ENCODE measurements at regions of chr1 and their contacts with region 1.

Region 1: DNA sequence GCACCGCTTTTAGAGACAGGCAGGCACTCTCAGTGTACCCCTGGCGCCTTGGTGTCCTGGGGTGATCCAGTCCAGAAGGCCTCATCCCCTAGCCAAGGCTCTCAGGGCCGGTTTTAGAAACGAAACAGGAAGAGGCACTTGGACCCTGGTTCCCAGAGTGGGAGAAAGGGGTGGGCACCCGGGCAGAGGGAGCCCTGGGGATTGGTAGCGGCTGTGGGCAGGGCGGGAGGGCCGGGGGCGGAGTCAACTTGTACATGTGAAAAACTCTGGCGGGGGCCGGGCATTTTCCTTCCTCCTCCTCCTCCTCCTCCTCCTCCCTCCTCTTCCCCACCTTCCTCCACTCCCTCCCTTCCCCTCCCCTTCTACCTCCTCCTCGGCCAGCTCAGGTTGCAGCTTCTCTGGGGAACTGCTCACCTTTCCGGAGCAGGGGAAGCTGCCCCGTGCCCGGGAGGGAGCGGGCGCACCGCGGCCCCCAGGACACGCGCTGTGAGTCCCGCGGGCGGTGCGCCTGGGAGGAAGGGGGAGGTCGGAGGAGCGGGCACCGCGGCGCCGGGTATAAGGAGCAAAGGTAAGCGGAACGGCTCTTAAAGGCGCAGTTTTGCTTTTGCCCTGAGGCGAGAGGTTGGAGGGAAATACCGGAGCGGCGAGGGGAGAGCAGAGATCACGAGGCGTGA is at the start of gene CDK18:
- DNase-seq: peak; percentile 67
- ATAC-seq: peak; percentile 71
- H3K4me3 ChIP-seq: peak within 1 kb of the TSS; percentile 36 to 81 (median 62)
- H3K4me3 Mint-ChIP-seq: peak within 1 kb of the TSS; percentile 84
- H3K27ac ChIP-seq: no peak within 1 kb of the TSS
- H3K27ac Mint-ChIP-seq: peak within 1 kb of the TSS; percentile 63
- H3K4me1 ChIP-seq: peaks cover 8 to 12% of the 10 kb centered on the region in 2 donors
- H3K4me1 Mint-ChIP-seq: peaks cover 13% of the 10 kb centered on the region
- H3K27me3 ChIP-seq: peaks cover 0 to 10% (median 2%) of the 10 kb centered on the region in 4 experiments
- H3K27me3 Mint-ChIP-seq: peaks cover 3% of the 10 kb centered on the region
- CTCF ChIP-seq: no peak
- total RNA-seq, gene CDK18: 3.7 and 4.7 TPM in 2 replicates

Region 2: DNA sequence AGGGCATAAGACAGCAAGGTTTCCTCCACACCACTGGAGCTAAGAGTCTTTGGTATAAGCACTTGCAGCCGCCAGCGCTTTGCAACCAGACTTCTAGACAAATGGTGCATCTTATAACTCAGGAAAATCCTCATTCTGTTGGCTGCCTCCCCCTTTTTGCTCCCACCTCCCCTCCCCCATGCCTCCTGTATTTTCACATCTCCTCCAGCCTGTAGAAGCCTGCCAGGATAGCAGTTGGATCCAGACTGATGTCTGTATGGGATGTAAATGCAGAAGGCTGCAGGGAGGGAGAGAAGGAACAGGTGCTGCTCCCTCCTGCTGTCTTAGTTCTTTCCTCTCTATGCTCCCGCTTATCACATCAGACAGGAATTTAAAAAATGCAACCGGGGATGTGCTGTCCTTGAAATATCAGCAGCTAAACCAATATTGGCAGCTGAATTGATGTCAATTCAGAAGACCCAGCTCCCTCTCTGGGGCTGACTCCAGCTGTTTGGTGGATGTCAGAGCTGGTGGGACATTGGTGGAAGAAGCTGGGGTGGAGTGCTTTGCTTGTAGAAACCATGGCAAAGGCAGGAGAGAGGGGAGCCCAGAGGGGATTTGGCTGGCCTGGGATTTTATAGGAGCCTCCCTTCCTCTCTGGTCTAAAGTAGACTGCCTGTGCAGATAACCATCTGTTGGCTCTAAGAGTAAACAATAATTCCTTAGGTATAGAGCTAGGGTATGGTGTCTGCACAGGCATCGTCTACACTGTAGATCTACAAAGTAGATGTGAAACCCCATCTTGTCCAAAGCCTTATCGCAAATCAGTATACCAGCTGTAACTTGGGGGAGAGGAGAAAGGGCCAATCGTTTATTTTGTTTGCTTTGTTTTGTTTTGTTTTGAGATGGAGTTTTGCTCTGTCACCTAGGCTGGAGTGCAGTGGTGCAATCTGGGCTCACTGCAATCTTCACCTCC is 580.2 kb before region 1 on chr1:
- CTCF ChIA-PET with region 1: no interaction called
- POLR2A ChIA-PET with region 1: no interaction called
- intact Hi-C with region 1: no loop called
- DNase-seq: no peak
- ATAC-seq: no peak
- H3K4me3 ChIP-seq: no peak overlapping the region
- H3K4me3 Mint-ChIP-seq: no peak overlapping the region
- H3K27ac ChIP-seq: no peak overlapping the region
- H3K27ac Mint-ChIP-seq: no peak overlapping the region
- H3K4me1 ChIP-seq: no peaks in the 10 kb centered on the region
- H3K4me1 Mint-ChIP-seq: no peaks in the 10 kb centered on the region
- H3K27me3 ChIP-seq: peaks cover 0 to 25% (median 5%) of the 10 kb centered on the region in 4 experiments
- H3K27me3 Mint-ChIP-seq: peaks cover 29% of the 10 kb centered on the region
- CTCF ChIP-seq: no peak

Region 3: DNA sequence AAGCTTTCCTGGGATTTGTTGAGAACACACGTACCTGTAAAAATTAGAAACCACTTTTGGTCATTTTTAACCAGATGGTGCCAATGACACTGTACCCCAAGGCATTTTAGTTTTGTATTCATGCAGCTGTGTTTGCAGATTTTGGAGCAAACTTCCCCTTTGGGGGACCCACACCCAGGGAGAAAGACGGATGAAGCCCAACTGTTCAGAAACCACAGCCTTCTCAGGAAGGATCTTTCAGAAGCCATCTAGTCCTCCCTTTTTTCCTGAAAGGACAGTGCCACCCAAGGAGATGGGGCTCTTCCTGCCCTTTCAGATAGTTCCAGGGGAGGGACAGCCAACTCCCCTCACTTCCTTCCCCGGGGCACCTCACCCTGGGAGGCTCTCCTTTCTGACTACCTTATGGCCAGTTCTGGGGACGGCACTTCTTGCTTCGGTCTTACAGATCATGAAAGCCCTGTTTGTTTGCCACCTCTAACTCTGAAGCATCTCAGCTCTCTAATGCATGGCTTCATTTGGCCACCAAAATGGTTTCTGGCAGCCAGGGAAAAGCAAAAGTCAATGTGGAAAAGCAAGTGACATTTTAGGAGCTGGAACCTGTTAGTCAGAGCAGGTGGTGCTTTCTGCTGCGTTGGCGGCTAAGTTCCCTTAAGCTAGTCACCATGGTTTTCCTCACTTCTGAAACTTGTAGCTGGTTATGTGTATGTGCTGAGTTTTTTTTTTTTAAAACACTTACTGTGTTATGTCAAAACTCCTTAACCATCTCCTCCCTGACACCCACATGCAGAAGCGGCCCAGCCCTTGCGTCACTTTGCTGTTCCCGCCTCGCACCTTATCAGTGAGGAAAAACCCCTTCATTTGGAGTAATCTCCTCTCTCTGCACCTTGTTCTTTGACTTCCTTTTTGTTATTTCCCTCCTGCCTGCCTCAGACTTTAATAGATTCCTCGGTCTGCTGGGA is 266.6 kb before region 1 on chr1:
- CTCF ChIA-PET with region 1: no interaction called
- POLR2A ChIA-PET with region 1: interaction called, 19 read pairs
- intact Hi-C with region 1: no loop called
- DNase-seq: no peak
- ATAC-seq: no peak
- H3K4me3 ChIP-seq: no peak overlapping the region
- H3K4me3 Mint-ChIP-seq: no peak overlapping the region
- H3K27ac ChIP-seq: no peak overlapping the region
- H3K27ac Mint-ChIP-seq: peak overlapping the region; percentile 20
- H3K4me1 ChIP-seq: peaks cover 7 to 10% of the 10 kb centered on the region in 2 donors
- H3K4me1 Mint-ChIP-seq: peaks cover 18% of the 10 kb centered on the region
- H3K27me3 ChIP-seq: peaks cover 0 to 11% (median 4%) of the 10 kb centered on the region in 4 experiments
- H3K27me3 Mint-ChIP-seq: peaks cover 27% of the 10 kb centered on the region
- CTCF ChIP-seq: no peak

Region 4: GRCh38 chr1:205430696-205431305 is 73.6 kb before region 1 on chr1:
- CTCF ChIA-PET with region 1: no interaction called
- POLR2A ChIA-PET with region 1: no interaction called
- intact Hi-C with region 1: no loop called
- DNase-seq: peak; percentile 88
- ATAC-seq: peak; percentile 91
- H3K4me3 ChIP-seq: peak overlapping the region; percentile 23 to 54 (median 46)
- H3K4me3 Mint-ChIP-seq: peak overlapping the region; percentile 80
- H3K27ac ChIP-seq: peak overlapping the region; percentile 4 to 43
- H3K27ac Mint-ChIP-seq: peak overlapping the region; percentile 70
- H3K4me1 ChIP-seq: peaks cover 25 to 33% of the 10 kb centered on the region in 2 donors
- H3K4me1 Mint-ChIP-seq: peaks cover 39% of the 10 kb centered on the region
- H3K27me3 ChIP-seq: no peaks in the 10 kb centered on the region
- H3K27me3 Mint-ChIP-seq: no peaks in the 10 kb centered on the region
- CTCF ChIP-seq: peak; percentile 70

Region 5: GRCh38 chr1:205633421-205633976 is 129.1 kb after region 1 on chr1:
- CTCF ChIA-PET with region 1: no interaction called
- POLR2A ChIA-PET with region 1: no interaction called
- intact Hi-C with region 1: no loop called
- DNase-seq: no peak
- ATAC-seq: no peak
- H3K4me3 ChIP-seq: no peak overlapping the region
- H3K4me3 Mint-ChIP-seq: no peak overlapping the region
- H3K27ac ChIP-seq: no peak overlapping the region
- H3K27ac Mint-ChIP-seq: no peak overlapping the region
- H3K4me1 ChIP-seq: peaks cover 23 to 28% of the 10 kb centered on the region in 2 donors
- H3K4me1 Mint-ChIP-seq: peaks cover 31% of the 10 kb centered on the region
- H3K27me3 ChIP-seq: no peaks in the 10 kb centered on the region
- H3K27me3 Mint-ChIP-seq: no peaks in the 10 kb centered on the region
- CTCF ChIP-seq: no peak